Colonic mucosa (tissue), 4 donors: ENCODE measurements at regions of chr3 and their contacts with region 1.

Region 1: DNA sequence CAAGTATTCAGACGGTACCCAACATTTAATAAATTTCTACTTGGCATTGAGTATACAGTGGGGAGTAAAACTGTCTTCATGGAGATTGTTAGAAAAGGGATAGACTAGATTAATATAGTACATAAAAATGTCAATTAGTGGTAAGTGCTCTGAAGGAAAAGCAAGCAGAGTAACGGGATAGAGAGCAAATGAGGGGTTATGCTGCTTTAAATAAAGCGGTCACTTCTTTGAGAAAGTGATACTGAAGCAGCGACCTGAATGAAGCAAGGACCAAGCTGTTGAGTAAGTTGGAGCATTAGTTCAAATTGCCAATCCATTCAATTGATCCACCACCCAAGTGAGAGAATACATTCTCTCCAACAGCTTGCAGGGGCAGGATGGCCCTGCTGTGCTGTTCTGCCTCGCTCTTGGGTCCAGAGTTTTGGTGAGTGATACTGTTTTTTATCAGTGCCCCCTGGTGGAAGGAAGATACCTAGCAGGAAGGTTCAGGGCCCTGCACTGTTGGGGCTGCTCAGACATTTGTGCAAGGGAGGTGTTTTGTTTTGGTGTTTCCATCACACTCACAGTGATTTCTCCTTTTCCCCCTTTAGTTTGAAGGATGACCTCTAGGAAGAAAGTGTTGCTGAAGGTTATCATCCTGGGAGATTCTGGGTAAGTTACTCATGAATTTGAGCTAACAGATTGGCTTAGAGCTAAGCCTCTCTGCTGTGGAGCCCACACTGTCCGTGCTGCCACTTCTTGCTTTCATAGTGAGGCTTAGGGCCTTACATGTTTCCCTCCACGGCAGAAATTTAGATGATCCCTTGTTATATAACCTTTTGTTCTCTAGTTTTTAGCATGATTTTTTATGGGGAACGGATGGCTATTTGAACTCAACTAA is 69.0 kb downstream of the RAB7A start:
- DNase-seq: peak; percentile 71
- H3K4me3 ChIP-seq: no peak overlapping the region
- H3K27ac ChIP-seq: peak overlapping the region; percentile 21
- H3K4me1 ChIP-seq: peaks cover 6% of the 10 kb centered on the region
- H3K27me3 ChIP-seq: no peaks in the 10 kb centered on the region
- CTCF ChIP-seq: peak; percentile 80

Region 2: DNA sequence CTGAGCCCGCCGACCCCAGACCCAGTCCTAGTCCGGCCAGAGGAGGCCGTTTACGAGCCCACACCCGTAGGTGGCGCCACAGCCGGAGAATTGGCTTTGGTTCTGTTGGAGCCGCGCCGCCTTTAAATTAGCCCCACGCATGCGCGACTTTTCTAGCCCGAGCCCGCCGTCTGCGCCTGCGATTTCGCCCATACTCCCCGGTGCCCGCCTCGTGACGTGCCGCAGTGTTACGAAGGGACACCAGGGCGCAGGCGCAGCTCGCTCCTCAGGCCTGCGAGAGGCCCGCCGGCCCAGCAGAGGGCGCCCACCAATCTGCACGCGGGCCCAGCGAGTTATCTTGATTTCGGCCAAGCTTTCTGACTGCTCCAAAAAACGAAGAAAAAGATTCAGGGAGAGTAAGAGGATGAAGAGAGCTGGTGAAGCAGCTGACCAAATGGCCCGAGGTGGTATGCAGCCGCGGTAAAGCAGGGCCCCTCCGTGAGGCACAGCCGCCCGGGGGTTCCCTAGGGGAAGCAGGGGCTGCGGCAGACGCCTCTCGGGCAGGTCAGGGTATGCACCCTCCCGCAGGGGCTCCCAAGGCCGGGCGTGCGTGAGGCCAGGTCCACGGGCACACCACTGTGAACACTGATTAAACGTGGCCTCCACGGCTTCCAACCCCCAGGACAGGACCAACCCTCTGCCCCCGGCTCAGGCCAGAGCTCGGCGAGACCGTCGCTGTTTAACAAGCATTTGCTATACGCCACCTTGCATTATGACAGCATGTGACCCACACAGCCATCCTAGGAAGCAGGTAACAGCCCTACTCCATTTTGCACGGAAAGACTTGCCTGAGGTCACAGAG is 177.2 kb before region 1 on chr3:
- intact Hi-C with region 1: loop called (anchors 10 kb)
- DNase-seq: peak; percentile 96
- H3K4me3 ChIP-seq: peak overlapping the region; percentile 90
- H3K27ac ChIP-seq: peak overlapping the region; percentile 74
- H3K4me1 ChIP-seq: peaks cover 8% of the 10 kb centered on the region
- H3K27me3 ChIP-seq: no peaks in the 10 kb centered on the region
- CTCF ChIP-seq: peak; percentile 86

Region 3: GRCh38 chr3:128680602-128681368 is 114.2 kb before region 1 on chr3:
- intact Hi-C with region 1: loop called (anchors 2 kb)
- DNase-seq: peak; percentile 99
- H3K4me3 ChIP-seq: peak overlapping the region; percentile 78
- H3K27ac ChIP-seq: peak overlapping the region; percentile 98
- H3K4me1 ChIP-seq: no peaks in the 10 kb centered on the region
- H3K27me3 ChIP-seq: no peaks in the 10 kb centered on the region
- CTCF ChIP-seq: peak; percentile 93